ENCODE measurements at regions of chr17 and their contacts with region 1.

Region 1: DNA sequence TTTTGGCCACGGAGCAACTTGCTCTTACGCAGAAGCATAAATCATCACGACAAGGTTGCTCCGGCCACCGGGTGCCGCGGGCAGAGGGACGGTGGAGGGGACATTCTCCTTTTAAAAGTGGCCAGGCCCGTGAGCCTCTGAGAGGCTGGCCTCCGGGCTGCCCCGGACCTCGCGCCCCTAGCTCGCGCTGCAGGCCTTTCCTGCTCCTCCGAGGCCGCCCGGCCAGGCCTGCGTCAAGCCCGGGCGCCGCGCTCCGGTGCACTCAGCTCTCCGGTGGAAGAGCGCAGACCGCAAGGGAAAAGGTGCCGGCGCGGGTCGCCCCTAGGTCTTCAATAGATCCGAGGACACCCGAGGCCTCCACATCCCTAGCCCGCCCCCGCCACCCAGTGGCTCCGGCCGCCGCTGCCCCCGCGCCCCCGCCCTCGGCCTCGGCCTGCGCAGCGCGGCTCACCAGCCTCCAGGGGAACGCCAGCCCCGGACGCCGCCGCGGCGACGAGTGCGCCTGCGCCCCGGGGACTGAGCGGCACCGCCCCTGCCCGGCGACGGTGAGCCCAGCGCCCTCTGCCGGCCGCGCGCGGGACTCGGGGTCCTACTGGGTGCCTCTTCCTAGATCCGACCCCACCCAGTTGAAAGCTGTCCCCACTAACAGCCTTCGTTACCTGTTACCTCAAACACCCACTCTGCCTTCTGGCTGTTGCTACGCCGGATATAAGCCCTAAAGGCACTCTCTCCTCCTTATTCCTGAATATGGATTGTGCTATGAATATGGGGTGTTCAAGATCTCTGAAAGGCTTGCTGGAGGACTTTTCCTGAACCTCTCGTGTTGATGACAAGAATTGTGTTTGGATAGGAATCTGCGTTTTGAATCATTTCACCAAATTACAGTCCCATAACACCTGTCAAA is at the start of gene LYRM9:
- DNase-seq: peak; percentile 55 to 94
- H3K4me3 ChIP-seq: peak within 1 kb of the TSS; percentile 78
- H3K27ac ChIP-seq: no peak within 1 kb of the TSS
- H3K4me1 ChIP-seq: peaks cover 21% of the 10 kb centered on the region
- H3K27me3 ChIP-seq: no peaks in the 10 kb centered on the region
- CTCF ChIP-seq: peak; percentile 81
- total RNA-seq, gene LYRM9: 7.6 and 9.2 TPM in 2 replicates

Region 2: GRCh38 chr17:28230011-28230410 is 336.9 kb after region 1 on chr17:
- CTCF ChIA-PET with region 1: no interaction called
- POLR2A ChIA-PET with region 1: no interaction called
- intact Hi-C with region 1: loop called (anchors 5 kb)
- DNase-seq: no peak
- H3K4me3 ChIP-seq: no peak overlapping the region
- H3K27ac ChIP-seq: no peak overlapping the region
- H3K4me1 ChIP-seq: peaks cover 21% of the 10 kb centered on the region
- H3K27me3 ChIP-seq: no peaks in the 10 kb centered on the region
- CTCF ChIP-seq: no peak

Region 3: GRCh38 chr17:28327031-28327607 is 434.0 kb after region 1 on chr17:
- CTCF ChIA-PET with region 1: no interaction called
- POLR2A ChIA-PET with region 1: no interaction called
- intact Hi-C with region 1: loop called (anchors 2 kb)
- DNase-seq: no peak
- H3K4me3 ChIP-seq: no peak overlapping the region
- H3K27ac ChIP-seq: no peak overlapping the region
- H3K4me1 ChIP-seq: peaks cover 67% of the 10 kb centered on the region
- H3K27me3 ChIP-seq: no peaks in the 10 kb centered on the region
- CTCF ChIP-seq: no peak

Region 4: GRCh38 chr17:28346746-28347246 is 453.7 kb after region 1 on chr17:
- CTCF ChIA-PET with region 1: no interaction called
- POLR2A ChIA-PET with region 1: interaction called, 11 read pairs
- intact Hi-C with region 1: no loop called
- DNase-seq: no peak
- H3K4me3 ChIP-seq: no peak overlapping the region
- H3K27ac ChIP-seq: peak overlapping the region; percentile 72
- H3K4me1 ChIP-seq: peaks cover 26% of the 10 kb centered on the region
- H3K27me3 ChIP-seq: no peaks in the 10 kb centered on the region
- CTCF ChIP-seq: peak; percentile 35; the same call in 1 of the 2 replicates